ENCODE measurements at regions of chr11 and their contacts with region 1.

Region 1: GRCh38 chr11:65454696-65455456 is 32.3 kb downstream of the NEAT1 start:
- DNase-seq: peak; percentile 48 to 89 (median 61)
- ATAC-seq: peak; percentile 92
- H3K4me3 ChIP-seq: peak overlapping the region; percentile 89
- H3K4me3 Mint-ChIP-seq: peak overlapping the region; percentile 86 to 95 (median 88)
- H3K27ac ChIP-seq: peak overlapping the region; percentile 70
- H3K27ac Mint-ChIP-seq: peak overlapping the region; percentile 14 to 92 (median 85)
- H3K4me1 ChIP-seq: peaks cover 5% of the 10 kb centered on the region in 2 donors
- H3K4me1 Mint-ChIP-seq: peaks cover 14 to 37% (median 21%) of the 10 kb centered on the region in 7 donors
- H3K27me3 ChIP-seq: no peaks in the 10 kb centered on the region
- H3K27me3 Mint-ChIP-seq: no peaks in the 10 kb centered on the region

Region 2: DNA sequence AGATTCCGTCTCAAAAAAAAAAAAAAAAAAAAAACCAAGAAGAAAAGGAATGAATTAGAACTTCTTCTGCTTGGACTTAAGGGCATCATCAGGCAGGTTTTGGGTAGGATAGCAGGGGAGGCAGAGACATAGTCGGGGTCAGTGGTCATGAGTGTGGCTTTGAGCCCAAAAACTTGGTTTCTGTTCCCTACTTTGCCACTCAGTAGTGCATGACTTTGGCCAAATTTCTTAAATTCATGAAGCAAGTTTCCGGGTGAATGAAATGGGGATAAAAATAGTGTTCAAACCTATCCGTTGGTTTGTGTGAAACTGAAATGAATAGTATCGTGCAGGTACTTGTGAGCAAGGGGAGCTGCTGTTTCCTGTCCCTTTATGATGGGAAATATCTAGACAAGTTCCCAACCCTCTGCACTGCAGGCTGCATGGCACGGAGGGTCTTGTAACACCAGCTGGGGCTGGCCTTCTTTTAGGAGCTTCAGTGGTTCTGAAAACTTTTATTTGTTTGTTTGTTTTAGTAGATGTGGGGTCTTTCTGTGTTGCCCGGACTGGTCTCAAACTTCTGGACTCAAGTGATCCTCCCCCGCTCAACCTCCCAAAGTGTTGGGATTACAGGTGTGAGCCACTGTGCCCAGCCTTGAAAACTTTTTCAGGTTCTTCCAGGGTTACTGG is 13.9 kb before region 1 on chr11:
- CTCF ChIA-PET with region 1: no interaction called
- POLR2A ChIA-PET with region 1: interaction called, 5 read pairs
- intact Hi-C with region 1: loop called in 1 of 2 experiments (anchors 2 kb)
- DNase-seq: peak in 1 of 9 donors; percentile 12
- ATAC-seq: peak; percentile 45
- H3K4me3 ChIP-seq: no peak overlapping the region
- H3K4me3 Mint-ChIP-seq: peak overlapping the region in 8 of 10 donors; percentile 29 to 71 (median 43)
- H3K27ac ChIP-seq: peak overlapping the region; percentile 3
- H3K27ac Mint-ChIP-seq: peak overlapping the region in 8 of 9 donors; percentile 64 to 90 (median 81)
- H3K4me1 ChIP-seq: peaks cover 0 to 12% of the 10 kb centered on the region in 2 donors
- H3K4me1 Mint-ChIP-seq: peaks cover 17 to 71% (median 53%) of the 10 kb centered on the region in 7 donors
- H3K27me3 ChIP-seq: no peaks in the 10 kb centered on the region
- H3K27me3 Mint-ChIP-seq: no peaks in the 10 kb centered on the region

Region 3: DNA sequence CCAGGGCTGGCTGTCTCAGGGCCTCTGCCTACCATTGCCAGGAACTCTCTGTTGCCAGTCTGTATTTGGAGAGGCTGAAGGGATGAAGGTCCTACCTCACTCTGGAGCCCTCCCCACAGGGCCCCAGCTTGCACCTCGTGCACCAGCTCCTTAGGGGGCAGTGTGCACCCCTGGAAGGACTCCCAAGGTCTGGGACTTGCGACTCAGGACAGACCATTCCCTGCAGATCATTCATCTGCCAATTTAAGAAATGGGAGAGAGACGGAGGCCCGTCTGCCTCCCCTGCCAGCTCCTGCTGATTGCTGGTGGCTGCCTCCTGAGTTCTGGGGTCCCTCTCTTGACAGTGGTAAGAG is 16.5 kb after region 1 on chr11:
- CTCF ChIA-PET with region 1: interaction called, 4 read pairs
- POLR2A ChIA-PET with region 1: interaction called, 5 read pairs
- intact Hi-C with region 1: loop called (anchors 2 kb)
- DNase-seq: peak in 2 of 9 donors; percentile 16 to 21
- ATAC-seq: peak; percentile 49
- H3K4me3 ChIP-seq: peak overlapping the region; percentile 15
- H3K4me3 Mint-ChIP-seq: peak overlapping the region in 9 of 10 donors; percentile 14 to 94 (median 84)
- H3K27ac ChIP-seq: peak overlapping the region; percentile 78
- H3K27ac Mint-ChIP-seq: peak overlapping the region; percentile 97 to 100 (median 98)
- H3K4me1 ChIP-seq: peaks cover 10 to 20% of the 10 kb centered on the region in 2 donors
- H3K4me1 Mint-ChIP-seq: peaks cover 6 to 37% (median 15%) of the 10 kb centered on the region in 7 donors
- H3K27me3 ChIP-seq: no peaks in the 10 kb centered on the region
- H3K27me3 Mint-ChIP-seq: no peaks in the 10 kb centered on the region

Region 4: GRCh38 chr11:65477149-65477965 is 22.5 kb after region 1 on chr11:
- CTCF ChIA-PET with region 1: no interaction called
- POLR2A ChIA-PET with region 1: interaction called, 5 read pairs
- intact Hi-C with region 1: loop called (anchors 2 kb)
- DNase-seq: peak; percentile 69 to 96 (median 75)
- ATAC-seq: peak; percentile 94
- H3K4me3 ChIP-seq: peak overlapping the region; percentile 97
- H3K4me3 Mint-ChIP-seq: peak overlapping the region; percentile 87 to 100 (median 96)
- H3K27ac ChIP-seq: peak overlapping the region; percentile 96
- H3K27ac Mint-ChIP-seq: peak overlapping the region; percentile 94 to 100 (median 99)
- H3K4me1 ChIP-seq: peaks cover 6 to 17% of the 10 kb centered on the region in 2 donors
- H3K4me1 Mint-ChIP-seq: peaks cover 8 to 30% (median 14%) of the 10 kb centered on the region in 7 donors
- H3K27me3 ChIP-seq: no peaks in the 10 kb centered on the region
- H3K27me3 Mint-ChIP-seq: peaks cover 0 to 2% (median 0%) of the 10 kb centered on the region in 5 donors